SK-N-SH (cell line): ENCODE measurements at regions of chr17 and their contacts with region 1.

Region 1: DNA sequence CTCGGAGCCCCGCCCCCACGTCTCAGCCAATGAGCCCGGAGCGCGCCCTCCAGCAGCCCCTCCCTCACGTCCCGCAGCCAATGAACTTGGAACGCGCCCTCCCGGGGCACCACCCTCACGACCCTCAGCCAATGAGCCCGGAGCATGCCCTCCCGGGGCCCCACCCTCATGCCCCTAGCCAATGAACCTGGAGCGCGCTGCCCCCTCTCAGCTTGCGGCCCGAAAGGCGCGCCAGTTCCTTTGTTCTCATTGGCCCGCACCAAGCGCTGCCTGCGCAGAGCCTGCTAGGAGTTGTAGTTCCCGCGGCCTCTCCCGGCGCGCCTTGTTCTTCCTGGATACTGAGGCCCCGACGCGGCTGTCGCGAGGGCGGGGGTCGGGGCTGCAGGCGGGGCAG is at the start of gene LRRC45:
- DNase-seq: peak; percentile 100
- H3K4me3 ChIP-seq: peak within 1 kb of the TSS; percentile 88 to 92
- H3K27ac ChIP-seq: peak within 1 kb of the TSS; percentile 41 to 69
- H3K4me1 ChIP-seq: peaks cover 18 to 36% of the 10 kb centered on the region in 2 experiments; a peak in 3 of 4 replicates
- H3K27me3 ChIP-seq: no peaks in the 10 kb centered on the region
- CTCF ChIP-seq: no peak
- EP300 ChIP-seq: no peak
- RAD21 ChIP-seq: no peak
- polyA plus RNA-seq, gene LRRC45: 30.3 and 31.5 TPM in 2 replicates

Region 2: GRCh38 chr17:81871387-81872230 is 151.4 kb before region 1 on chr17:
- CTCF ChIA-PET with region 1: interaction called, 23 read pairs
- POLR2A ChIA-PET with region 1: no interaction called
- DNase-seq: peak; percentile 100
- H3K4me3 ChIP-seq: peak overlapping the region; percentile 82 to 83
- H3K27ac ChIP-seq: peak overlapping the region; percentile 95
- H3K4me1 ChIP-seq: peaks cover 24 to 40% of the 10 kb centered on the region in 2 experiments; a peak in 3 of 4 replicates
- H3K27me3 ChIP-seq: no peaks in the 10 kb centered on the region
- CTCF ChIP-seq: peak; percentile 37; the same call in 1 of the 2 replicates
- EP300 ChIP-seq: 0 out of 4 replicates have a peak, but pooled peaks of 1 of the 2 experiments have one; percentile 6
- RAD21 ChIP-seq: no peak

Region 3: GRCh38 chr17:81941790-81942553 is 81.0 kb before region 1 on chr17:
- CTCF ChIA-PET with region 1: interaction called, 168 read pairs
- POLR2A ChIA-PET with region 1: interaction called, 3 read pairs
- DNase-seq: no peak
- H3K4me3 ChIP-seq: no peak overlapping the region
- H3K27ac ChIP-seq: no peak overlapping the region
- H3K4me1 ChIP-seq: peaks cover 0 to 2% of the 10 kb centered on the region in 2 experiments; a peak in 1 of 4 replicates
- H3K27me3 ChIP-seq: no peaks in the 10 kb centered on the region
- CTCF ChIP-seq: no peak
- EP300 ChIP-seq: no peak
- RAD21 ChIP-seq: no peak

Region 4: DNA sequence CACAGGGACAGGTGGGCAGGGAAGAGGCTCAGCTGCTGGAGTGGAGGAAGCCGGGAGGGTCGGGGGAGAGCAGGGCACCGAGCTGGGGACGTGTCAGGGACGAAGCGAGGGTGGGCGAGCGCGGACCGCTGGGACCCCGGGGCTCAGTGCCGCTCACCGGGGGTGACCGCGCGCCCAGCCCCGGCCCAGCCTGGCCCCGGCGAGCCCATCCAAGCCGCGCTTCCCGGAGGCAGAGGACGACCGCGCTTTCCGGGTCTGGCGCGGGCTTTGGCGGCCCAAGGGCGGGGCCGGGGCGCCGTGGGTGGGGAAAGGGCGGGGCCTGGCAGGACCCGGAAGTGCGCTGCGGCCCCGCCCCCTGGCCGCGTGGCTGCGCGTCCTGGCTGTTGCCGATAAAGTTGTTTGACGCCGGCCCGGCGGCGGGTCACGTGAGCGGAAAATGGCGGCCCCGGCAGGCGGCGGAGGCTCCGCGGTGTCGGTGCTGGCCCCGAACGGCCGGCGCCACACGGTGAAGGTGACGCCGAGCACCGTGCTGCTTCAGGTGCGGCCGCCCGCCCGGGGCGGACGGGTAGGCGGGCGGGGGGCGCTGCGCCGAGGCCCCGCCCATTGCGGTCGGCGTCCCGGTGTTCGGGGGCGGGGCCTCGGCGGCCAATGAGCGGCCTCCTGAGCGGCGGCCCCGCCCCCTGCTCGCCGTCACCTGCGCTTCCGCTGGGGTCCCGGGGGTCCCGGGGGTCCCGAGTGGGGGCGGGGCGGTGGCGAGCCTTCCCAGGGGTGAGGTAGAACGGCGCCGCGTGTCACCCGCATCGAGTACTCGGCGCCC is 45.6 kb before region 1 on chr17 and contains the start of gene ASPSCR1:
- CTCF ChIA-PET with region 1: interaction called, 1,216 read pairs
- POLR2A ChIA-PET with region 1: interaction called, 3 read pairs
- DNase-seq: peak; percentile 99
- H3K4me3 ChIP-seq: peak within 1 kb of the TSS; percentile 69 to 95
- H3K27ac ChIP-seq: peak within 1 kb of the TSS; percentile 65 to 83
- H3K4me1 ChIP-seq: peaks cover 10 to 18% of the 10 kb centered on the region in 2 experiments; a peak in 2 of 4 replicates
- H3K27me3 ChIP-seq: no peaks in the 10 kb centered on the region
- CTCF ChIP-seq: no peak
- EP300 ChIP-seq: peak in 1 of 2 experiments; percentile 48; a peak in 2 of 4 replicates
- RAD21 ChIP-seq: no peak
- polyA plus RNA-seq, gene ASPSCR1: 27.5 and 36.2 TPM in 2 replicates

Region 5: GRCh38 chr17:82003411-82004381 is 19.3 kb before region 1 on chr17:
- CTCF ChIA-PET with region 1: interaction called, 68 read pairs
- POLR2A ChIA-PET with region 1: no interaction called
- DNase-seq: no peak
- H3K4me3 ChIP-seq: no peak overlapping the region; a peak in 1 of 4 replicates
- H3K27ac ChIP-seq: peak overlapping the region; percentile 41 to 90
- H3K4me1 ChIP-seq: peaks cover 16 to 44% of the 10 kb centered on the region in 2 experiments; a peak in 3 of 4 replicates
- H3K27me3 ChIP-seq: no peaks in the 10 kb centered on the region
- CTCF ChIP-seq: peak; percentile 23
- EP300 ChIP-seq: peak in 1 of 2 experiments; percentile 90; a peak in 2 of 4 replicates
- RAD21 ChIP-seq: no peak

Region 6: DNA sequence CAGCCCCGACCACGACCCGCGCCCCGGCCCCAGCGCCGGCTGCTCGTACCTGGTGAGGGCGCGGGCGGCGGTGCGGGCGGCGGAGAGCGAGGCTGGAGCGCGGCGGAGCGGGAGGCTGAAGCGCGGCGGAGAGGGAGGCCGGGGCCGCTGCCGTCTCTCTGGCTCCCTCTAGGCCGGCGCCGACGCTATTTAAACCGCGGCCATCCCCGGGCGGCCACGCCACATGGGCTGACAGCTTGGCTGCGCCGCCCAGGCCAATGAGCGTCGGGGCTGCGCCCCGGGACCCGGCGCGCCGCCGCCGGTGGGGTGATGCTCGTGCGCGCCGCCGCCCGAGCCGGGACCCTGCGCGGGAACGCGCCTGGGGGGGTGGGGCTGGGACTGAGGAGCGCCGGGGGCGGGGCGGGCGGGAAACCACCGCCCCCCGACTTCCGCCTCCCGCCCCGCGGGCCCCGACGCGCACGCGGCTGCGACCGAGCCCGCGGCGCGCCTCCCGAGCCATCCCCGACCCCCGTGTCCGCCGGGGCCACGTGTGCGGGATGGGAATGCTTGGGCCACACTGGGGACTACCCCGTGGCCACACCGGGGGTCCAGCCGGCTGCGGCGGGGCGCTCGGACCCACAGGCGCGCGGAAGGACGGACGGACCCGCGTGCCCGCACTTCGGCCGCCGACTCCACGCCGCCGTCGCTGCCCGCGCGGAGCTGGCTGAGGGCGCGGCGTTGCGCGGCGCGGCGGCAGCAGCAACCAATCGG is 75.3 kb after region 1 on chr17 and contains the start of gene FASN:
- CTCF ChIA-PET with region 1: interaction called, 12 read pairs
- POLR2A ChIA-PET with region 1: interaction called, 19 read pairs
- DNase-seq: peak; percentile 100
- H3K4me3 ChIP-seq: peak within 1 kb of the TSS; percentile 86 to 94
- H3K27ac ChIP-seq: peak within 1 kb of the TSS; percentile 79 to 99
- H3K4me1 ChIP-seq: peaks cover 21 to 53% of the 10 kb centered on the region in 2 experiments
- H3K27me3 ChIP-seq: no peaks in the 10 kb centered on the region
- CTCF ChIP-seq: peak; percentile 48
- EP300 ChIP-seq: peak in 1 of 2 experiments; percentile 22; a peak in 1 of 4 replicates
- RAD21 ChIP-seq: peak; percentile 28; the same call in 1 of the 2 replicates
- polyA plus RNA-seq, gene FASN: 28.1 and 55.1 TPM in 2 replicates

Region 7: GRCh38 chr17:82565551-82565950 is 542.6 kb after region 1 on chr17:
- CTCF ChIA-PET with region 1: no interaction called
- POLR2A ChIA-PET with region 1: no interaction called
- DNase-seq: no peak
- H3K4me3 ChIP-seq: no peak overlapping the region
- H3K27ac ChIP-seq: no peak overlapping the region
- H3K4me1 ChIP-seq: peaks cover 0 to 5% of the 10 kb centered on the region in 2 experiments; a peak in 2 of 4 replicates
- H3K27me3 ChIP-seq: no peaks in the 10 kb centered on the region
- CTCF ChIP-seq: no peak
- EP300 ChIP-seq: no peak
- RAD21 ChIP-seq: no peak